ENCODE measurements at regions of chr11 and their contacts with region 1.

Region 1: DNA sequence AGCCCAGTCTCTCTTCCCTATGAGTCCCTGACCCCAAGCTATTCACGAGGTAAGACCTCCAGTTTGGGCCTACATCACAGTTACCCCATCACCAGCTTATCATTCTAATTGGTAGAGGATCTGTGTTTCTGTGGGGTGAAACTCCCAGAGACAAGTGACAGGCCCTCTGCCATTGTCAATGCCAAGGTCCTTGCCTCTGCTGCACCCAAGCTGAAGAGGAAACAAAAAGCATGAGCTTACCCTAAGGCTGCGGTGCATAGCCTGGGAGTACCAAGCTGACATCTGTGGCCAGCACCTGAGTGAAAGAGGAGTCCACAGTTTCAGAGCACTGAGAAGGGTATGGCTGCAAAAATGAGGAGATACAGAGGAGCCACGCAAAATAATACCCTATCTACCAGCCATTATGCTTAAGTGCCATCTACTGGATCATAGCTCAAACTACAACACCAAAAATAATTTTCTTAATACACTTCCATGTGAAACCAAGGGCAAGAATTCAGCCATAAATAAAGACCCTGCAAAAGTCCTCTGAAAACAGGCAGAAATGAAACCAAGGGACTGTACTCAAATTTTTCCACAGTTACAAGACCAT is 62.3 kb upstream of the ANO5 start:
- DNase-seq: peak; percentile 2
- ATAC-seq: no peak
- H3K4me3 ChIP-seq: no peak overlapping the region
- H3K27ac ChIP-seq: no peak overlapping the region
- H3K4me1 ChIP-seq: no peaks in the 10 kb centered on the region
- H3K27me3 ChIP-seq: no peaks in the 10 kb centered on the region
- CTCF ChIP-seq: peak; percentile 42; the same call in 1 of the 2 replicates

Region 2: GRCh38 chr11:22163394-22163797 is 32.8 kb after region 1 on chr11:
- CTCF ChIA-PET with region 1: no interaction called
- POLR2A ChIA-PET with region 1: no interaction called
- intact Hi-C with region 1: loop called (anchors 2 kb)
- DNase-seq: no peak
- ATAC-seq: no peak
- H3K4me3 ChIP-seq: no peak overlapping the region
- H3K27ac ChIP-seq: no peak overlapping the region
- H3K4me1 ChIP-seq: no peaks in the 10 kb centered on the region
- H3K27me3 ChIP-seq: no peaks in the 10 kb centered on the region
- CTCF ChIP-seq: no peak

Measured in PC-3 (cell line).